Endothelial cell of umbilical vein (primary cell): ENCODE measurements at regions of chr13 and their contacts with region 1.

Region 1: DNA sequence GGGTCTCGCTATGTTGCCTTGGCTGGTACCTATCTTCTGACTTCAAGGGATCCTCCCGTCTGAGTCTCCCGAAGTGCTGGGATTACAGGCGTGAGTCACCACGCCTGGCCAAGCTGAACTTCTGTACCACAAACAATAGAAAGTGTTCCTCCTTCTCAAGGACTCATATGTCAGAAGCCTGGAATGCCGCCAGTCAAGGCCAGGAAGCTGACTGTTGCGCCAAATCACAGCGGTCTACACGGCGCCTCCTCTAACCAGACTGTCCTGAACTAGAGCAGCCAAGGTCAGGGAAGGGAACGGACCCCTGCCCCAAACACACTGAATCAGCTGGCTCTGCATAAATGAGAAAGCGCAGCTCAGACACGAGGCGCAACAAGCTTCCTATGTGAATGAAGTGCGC is 14.6 kb downstream of the RAB20 start:
- DNase-seq: peak; percentile 94
- H3K4me3 ChIP-seq: no peak overlapping the region
- H3K27ac ChIP-seq: peak overlapping the region; percentile 2
- H3K4me1 ChIP-seq: peaks cover 12% of the 10 kb centered on the region
- H3K27me3 ChIP-seq: no peaks in the 10 kb centered on the region
- CTCF ChIP-seq: no peak
- POLR2A ChIP-seq: no peak

Region 2: GRCh38 chr13:110561344-110562035 is 14.6 kb after region 1 on chr13 and contains the start of gene RAB20:
- CTCF ChIA-PET with region 1: interaction called, 9 read pairs
- POLR2A ChIA-PET with region 1: no interaction called
- dilution Hi-C with region 1: no loop called
- intact Hi-C with region 1: loop called (anchors 2 kb)
- DNase-seq: peak; percentile 67
- H3K4me3 ChIP-seq: peak within 1 kb of the TSS; percentile 73 to 82 (median 80)
- H3K27ac ChIP-seq: no peak within 1 kb of the TSS
- H3K4me1 ChIP-seq: peaks cover 8% of the 10 kb centered on the region
- H3K27me3 ChIP-seq: peaks cover 15 to 20% of the 10 kb centered on the region in 2 experiments
- CTCF ChIP-seq: no peak
- POLR2A ChIP-seq: peak; percentile 32
- total RNA-seq, gene RAB20: 1.3 and 1.4 TPM in 2 replicates

Region 3: DNA sequence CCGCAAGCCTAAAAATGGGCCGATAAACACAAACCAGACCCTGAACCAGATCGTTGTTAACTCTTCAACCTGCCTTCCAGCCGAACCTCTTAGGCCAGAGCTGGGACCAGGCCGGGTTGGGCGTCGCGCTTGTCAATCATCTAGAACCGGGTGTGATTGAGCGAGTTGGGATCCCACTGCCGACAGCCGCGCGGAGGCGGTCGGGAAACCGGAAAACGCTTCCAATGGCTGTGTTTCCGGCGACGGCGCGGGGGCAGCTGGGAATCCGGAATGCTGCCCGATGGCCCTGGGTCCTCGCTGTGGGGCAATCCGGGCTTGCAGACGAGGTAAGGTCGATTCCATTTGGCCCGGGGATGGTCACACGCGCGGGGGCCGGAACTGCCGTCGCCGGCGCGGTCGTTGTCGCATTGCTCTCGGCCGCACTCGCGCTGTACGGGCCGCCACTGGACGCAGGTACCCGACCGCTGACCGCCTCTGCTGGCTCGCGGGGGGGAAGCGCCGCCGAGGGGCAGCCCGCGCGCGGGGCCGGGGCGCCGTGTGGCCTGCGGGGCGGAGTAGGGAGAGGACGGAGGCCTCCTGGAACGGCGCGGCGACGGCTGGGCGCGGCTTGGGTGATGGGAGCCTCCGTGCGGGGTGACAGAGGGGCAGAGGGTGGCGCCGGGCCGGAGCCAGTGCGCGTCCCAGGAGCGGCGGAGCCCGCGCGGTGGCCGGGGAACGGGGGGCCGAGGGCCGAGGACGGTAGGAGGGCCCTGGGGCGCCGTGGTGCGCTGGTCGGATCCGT is 68.6 kb after region 1 on chr13 and contains the start of gene NAXD:
- CTCF ChIA-PET with region 1: no interaction called
- POLR2A ChIA-PET with region 1: no interaction called
- dilution Hi-C with region 1: no loop called
- intact Hi-C with region 1: no loop called
- DNase-seq: peak; percentile 94
- H3K4me3 ChIP-seq: peak within 1 kb of the TSS; percentile 12 to 72 (median 58)
- H3K27ac ChIP-seq: peak within 1 kb of the TSS; percentile 66
- H3K4me1 ChIP-seq: peaks cover 20% of the 10 kb centered on the region
- H3K27me3 ChIP-seq: no peaks in the 10 kb centered on the region
- CTCF ChIP-seq: no peak
- POLR2A ChIP-seq: peak; percentile 79
- total RNA-seq, gene NAXD: 19.9 and 22.4 TPM in 2 replicates

Region 4: GRCh38 chr13:110771194-110771593 is 224.3 kb after region 1 on chr13:
- CTCF ChIA-PET with region 1: no interaction called
- POLR2A ChIA-PET with region 1: no interaction called
- dilution Hi-C with region 1: no loop called
- intact Hi-C with region 1: no loop called
- DNase-seq: peak; percentile 61
- H3K4me3 ChIP-seq: no peak overlapping the region
- H3K27ac ChIP-seq: no peak overlapping the region
- H3K4me1 ChIP-seq: peaks cover 10% of the 10 kb centered on the region
- H3K27me3 ChIP-seq: peaks cover 0 to 2% of the 10 kb centered on the region in 2 experiments
- CTCF ChIP-seq: no peak
- POLR2A ChIP-seq: no peak